A673 (cell line): ENCODE measurements at regions of chr11 and their contacts with region 1.

Region 1: GRCh38 chr11:30435520-30435919 is 112.6 kb downstream of the ARL14EP start:
- DNase-seq: no peak
- H3K4me3 ChIP-seq: no peak overlapping the region
- H3K27ac ChIP-seq: no peak overlapping the region
- H3K4me1 ChIP-seq: no peaks in the 10 kb centered on the region
- H3K27me3 ChIP-seq: no peaks in the 10 kb centered on the region
- CTCF ChIP-seq: no peak

Region 2: GRCh38 chr11:30488304-30488998 is 52.9 kb after region 1 on chr11:
- CTCF ChIA-PET with region 1: no interaction called
- POLR2A ChIA-PET with region 1: no interaction called
- intact Hi-C with region 1: no loop called
- DNase-seq: peak; percentile 35
- H3K4me3 ChIP-seq: no peak overlapping the region
- H3K27ac ChIP-seq: no peak overlapping the region
- H3K4me1 ChIP-seq: no peaks in the 10 kb centered on the region
- H3K27me3 ChIP-seq: no peaks in the 10 kb centered on the region
- CTCF ChIP-seq: no peak

Region 3: DNA sequence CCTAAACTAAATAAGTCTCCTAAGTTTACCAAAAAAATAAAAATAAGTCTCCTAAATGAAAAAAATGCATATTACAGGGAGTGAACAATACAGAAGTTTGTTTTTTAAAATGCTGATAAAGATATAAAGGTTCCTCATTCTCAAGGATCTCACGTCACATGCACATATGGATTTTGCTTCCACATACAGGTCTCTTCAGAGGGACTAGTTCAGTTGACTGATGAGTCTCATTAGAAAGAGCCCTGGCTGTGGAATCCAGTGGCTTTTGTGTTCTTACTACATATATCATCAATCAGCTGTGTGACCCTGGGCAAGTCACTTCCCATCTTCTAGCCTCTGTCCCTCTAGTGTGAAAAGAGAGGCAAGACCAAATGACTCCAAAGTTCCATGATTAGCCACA is 107.5 kb after region 1 on chr11:
- CTCF ChIA-PET with region 1: interaction called, 10 read pairs
- POLR2A ChIA-PET with region 1: no interaction called
- intact Hi-C with region 1: no loop called
- DNase-seq: no peak
- H3K4me3 ChIP-seq: no peak overlapping the region
- H3K27ac ChIP-seq: no peak overlapping the region
- H3K4me1 ChIP-seq: no peaks in the 10 kb centered on the region
- H3K27me3 ChIP-seq: no peaks in the 10 kb centered on the region
- CTCF ChIP-seq: no peak

Region 4: DNA sequence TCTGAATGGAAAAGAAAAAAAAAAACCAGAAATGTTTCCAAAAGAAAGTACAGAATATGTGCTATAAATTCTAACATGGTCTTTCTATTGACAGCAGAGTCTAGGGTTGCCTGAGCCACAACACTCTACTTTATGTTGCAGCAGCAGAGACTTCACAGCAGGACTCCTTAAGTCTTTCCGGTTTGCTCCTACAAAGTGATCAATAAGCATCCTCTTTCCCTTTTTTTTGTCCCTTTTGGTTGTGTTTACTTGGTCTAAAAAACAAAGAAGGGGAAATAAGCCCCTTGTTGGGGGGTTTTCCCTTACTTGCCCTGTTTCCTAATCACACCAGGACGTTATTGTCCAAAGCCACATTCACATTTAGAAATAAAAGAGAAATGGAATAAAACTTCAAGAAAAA is 313.7 kb after region 1 on chr11:
- CTCF ChIA-PET with region 1: no interaction called
- POLR2A ChIA-PET with region 1: no interaction called
- intact Hi-C with region 1: no loop called
- DNase-seq: peak; percentile 100
- H3K4me3 ChIP-seq: no peak overlapping the region
- H3K27ac ChIP-seq: peak overlapping the region; percentile 73
- H3K4me1 ChIP-seq: peaks cover 50% of the 10 kb centered on the region
- H3K27me3 ChIP-seq: no peaks in the 10 kb centered on the region
- CTCF ChIP-seq: no peak